ENCODE measurements at regions of chr17 and their contacts with region 1.

Region 1: DNA sequence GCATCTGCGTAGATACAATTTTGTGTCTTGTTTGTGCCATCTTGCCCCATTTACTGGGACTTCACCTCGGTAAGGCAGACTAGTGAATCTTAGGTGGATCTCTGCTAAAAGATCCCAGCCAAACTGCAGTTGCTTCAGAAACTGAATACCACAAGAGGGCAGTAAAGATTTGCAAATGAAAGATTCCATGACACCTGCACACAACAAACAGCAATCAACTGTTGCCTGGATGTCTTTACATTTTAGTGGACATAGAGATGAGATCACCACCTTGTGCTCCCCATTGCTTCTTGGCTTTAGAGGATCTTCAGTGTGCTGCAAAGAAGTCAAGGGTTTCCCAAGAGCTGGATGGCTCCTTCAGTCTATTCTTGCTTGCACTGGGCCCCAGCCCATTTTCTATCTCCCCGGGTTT is 119.2 kb upstream of the CACNG5 start:
- DNase-seq: peak in 1 of 3 donors; percentile 53
- ATAC-seq: peak; percentile 70
- H3K4me3 ChIP-seq: no peak overlapping the region
- H3K4me1 ChIP-seq: peaks cover 29% of the 10 kb centered on the region
- CTCF ChIP-seq: peak; percentile 58

Region 2: GRCh38 chr17:66906321-66907278 is 190.8 kb after region 1 on chr17:
- intact Hi-C with region 1: loop called (anchors 5 kb)
- DNase-seq: peak; percentile 74 to 90 (median 81)
- ATAC-seq: peak; percentile 90
- H3K4me3 ChIP-seq: no peak overlapping the region
- H3K4me1 ChIP-seq: no peaks in the 10 kb centered on the region
- CTCF ChIP-seq: peak; percentile 86

Measured in mucosa of descending colon (tissue), 3 donors.